Caco-2 (cell line): ENCODE measurements at regions of chr16 and their contacts with region 1.

Region 1: GRCh38 chr16:72832621-72833248 is 215.2 kb downstream of the ZFHX3 start:
- DNase-seq: peak; percentile 84 to 93
- H3K4me3 ChIP-seq: no peak overlapping the region
- H3K4me3 Mint-ChIP-seq: no peak overlapping the region
- H3K27ac Mint-ChIP-seq: no peak overlapping the region
- H3K4me1 ChIP-seq: peaks cover 17% of the 10 kb centered on the region
- H3K4me1 Mint-ChIP-seq: no peaks in the 10 kb centered on the region
- H3K27me3 ChIP-seq: no peaks in the 10 kb centered on the region
- H3K27me3 Mint-ChIP-seq: no peaks in the 10 kb centered on the region
- CTCF ChIP-seq: peak; percentile 97 to 99

Region 2: GRCh38 chr16:72501739-72502593 is 330.8 kb before region 1 on chr16:
- CTCF ChIA-PET with region 1: interaction called, 3 read pairs
- POLR2A ChIA-PET with region 1: no interaction called
- intact Hi-C with region 1: loop called (anchors 1 kb)
- DNase-seq: peak; percentile 66 to 75
- H3K4me3 ChIP-seq: no peak overlapping the region
- H3K4me3 Mint-ChIP-seq: no peak overlapping the region
- H3K27ac Mint-ChIP-seq: no peak overlapping the region
- H3K4me1 ChIP-seq: no peaks in the 10 kb centered on the region
- H3K4me1 Mint-ChIP-seq: peaks cover 7% of the 10 kb centered on the region
- H3K27me3 ChIP-seq: no peaks in the 10 kb centered on the region
- H3K27me3 Mint-ChIP-seq: no peaks in the 10 kb centered on the region
- CTCF ChIP-seq: peak; percentile 91 to 92

Region 3: GRCh38 chr16:72856797-72857196 is 24.1 kb after region 1 on chr16:
- CTCF ChIA-PET with region 1: interaction called, 13 read pairs
- POLR2A ChIA-PET with region 1: no interaction called
- intact Hi-C with region 1: no loop called
- DNase-seq: peak in 1 of 2 experiments; percentile 48
- H3K4me3 ChIP-seq: no peak overlapping the region
- H3K4me3 Mint-ChIP-seq: no peak overlapping the region
- H3K27ac Mint-ChIP-seq: no peak overlapping the region
- H3K4me1 ChIP-seq: no peaks in the 10 kb centered on the region
- H3K4me1 Mint-ChIP-seq: no peaks in the 10 kb centered on the region
- H3K27me3 ChIP-seq: no peaks in the 10 kb centered on the region
- H3K27me3 Mint-ChIP-seq: no peaks in the 10 kb centered on the region
- CTCF ChIP-seq: peak; percentile 29 to 53

Region 4: DNA sequence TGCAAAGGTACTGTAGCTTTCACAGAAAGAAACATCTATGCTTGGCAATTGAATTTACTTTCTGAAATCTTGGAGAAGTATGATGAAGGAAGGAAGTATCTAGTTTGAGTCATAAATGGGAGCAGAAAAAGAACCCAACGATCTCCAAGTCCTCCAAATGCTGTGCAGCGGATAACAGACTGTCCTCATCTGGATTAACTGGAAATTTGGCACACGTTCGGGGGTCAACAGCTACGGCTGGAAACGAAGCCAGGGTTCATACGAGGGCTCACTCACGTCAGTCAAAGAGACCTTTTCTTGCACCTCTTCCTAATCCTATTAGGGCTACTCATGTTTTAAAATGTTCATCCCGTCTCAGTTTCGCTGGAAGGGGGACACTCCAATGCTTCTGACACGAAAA is 63.2 kb after region 1 on chr16:
- CTCF ChIA-PET with region 1: interaction called, 13 read pairs
- POLR2A ChIA-PET with region 1: no interaction called
- intact Hi-C with region 1: no loop called
- DNase-seq: no peak
- H3K4me3 ChIP-seq: no peak overlapping the region
- H3K4me3 Mint-ChIP-seq: no peak overlapping the region
- H3K27ac Mint-ChIP-seq: no peak overlapping the region
- H3K4me1 ChIP-seq: no peaks in the 10 kb centered on the region; the same call in 1 of the 2 replicates
- H3K4me1 Mint-ChIP-seq: peaks cover 13% of the 10 kb centered on the region
- H3K27me3 ChIP-seq: no peaks in the 10 kb centered on the region
- H3K27me3 Mint-ChIP-seq: no peaks in the 10 kb centered on the region
- CTCF ChIP-seq: no peak

Region 5: DNA sequence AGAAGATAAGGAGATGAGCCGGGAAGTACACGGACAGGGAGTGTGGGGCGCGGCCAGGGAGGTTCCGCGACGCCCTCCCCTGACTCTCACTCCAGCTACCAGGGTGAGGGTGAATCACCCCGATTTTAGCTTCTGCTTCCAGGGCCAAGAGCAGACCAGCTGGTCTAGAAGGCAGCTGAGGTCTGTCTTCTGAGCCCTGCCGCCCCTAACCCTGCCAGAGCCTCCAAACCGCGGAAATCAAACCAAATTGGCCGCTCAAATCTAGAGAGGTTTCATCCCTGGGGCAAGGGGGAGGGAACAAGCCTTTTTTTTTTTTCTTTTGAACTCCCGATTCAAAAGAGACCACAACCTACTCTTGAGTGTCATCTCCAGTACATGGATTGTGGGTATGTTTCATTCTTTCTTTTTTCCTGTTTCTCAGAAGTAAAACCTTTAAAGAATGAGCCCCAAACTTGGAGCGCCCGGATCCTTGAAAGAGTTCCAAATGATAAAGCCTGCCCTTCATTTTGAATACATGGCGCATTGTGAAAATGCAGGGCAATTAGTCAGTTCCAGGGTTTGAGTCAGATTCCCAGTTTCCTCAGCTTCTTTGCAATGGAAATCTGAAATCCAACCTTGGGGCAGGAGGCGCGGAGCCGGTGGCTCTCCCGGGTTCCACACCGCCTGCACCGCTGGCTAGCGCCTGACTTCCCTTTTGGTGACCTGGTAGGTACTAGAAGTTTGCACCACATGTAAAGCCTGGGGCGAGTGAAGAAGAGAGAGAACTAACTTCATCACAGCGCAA is 231.7 kb after region 1 on chr16:
- CTCF ChIA-PET with region 1: interaction called, 12 read pairs
- POLR2A ChIA-PET with region 1: no interaction called
- intact Hi-C with region 1: no loop called
- DNase-seq: no peak
- H3K4me3 ChIP-seq: no peak overlapping the region
- H3K4me3 Mint-ChIP-seq: peak overlapping the region; percentile 62
- H3K27ac Mint-ChIP-seq: no peak overlapping the region
- H3K4me1 ChIP-seq: peaks cover 4% of the 10 kb centered on the region; the same call in 1 of the 2 replicates
- H3K4me1 Mint-ChIP-seq: peaks cover 22% of the 10 kb centered on the region
- H3K27me3 ChIP-seq: no peaks in the 10 kb centered on the region
- H3K27me3 Mint-ChIP-seq: no peaks in the 10 kb centered on the region
- CTCF ChIP-seq: no peak

Region 6: DNA sequence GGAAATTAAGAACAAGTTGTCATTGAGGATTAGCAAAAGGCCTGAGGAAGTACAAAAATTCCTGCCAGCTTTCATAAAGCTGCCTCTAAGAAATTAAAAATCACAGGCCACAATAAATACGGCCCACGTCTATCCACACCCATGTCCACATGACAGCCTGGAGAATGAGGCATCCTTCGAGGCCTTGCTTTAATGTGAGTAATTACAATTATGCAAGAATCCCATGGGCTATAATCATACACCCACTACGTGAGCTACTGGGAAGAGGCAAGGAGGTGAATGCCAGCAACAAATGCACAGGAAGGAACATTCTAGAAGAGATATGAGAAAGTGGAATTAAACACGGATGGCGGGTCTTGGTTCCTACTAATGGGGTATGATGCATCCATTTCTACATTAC is 280.6 kb after region 1 on chr16:
- CTCF ChIA-PET with region 1: no interaction called
- POLR2A ChIA-PET with region 1: no interaction called
- intact Hi-C with region 1: no loop called
- DNase-seq: no peak
- H3K4me3 ChIP-seq: no peak overlapping the region
- H3K4me3 Mint-ChIP-seq: no peak overlapping the region
- H3K27ac Mint-ChIP-seq: no peak overlapping the region
- H3K4me1 ChIP-seq: peaks cover 8% of the 10 kb centered on the region; the same call in 1 of the 2 replicates
- H3K4me1 Mint-ChIP-seq: peaks cover 13% of the 10 kb centered on the region
- H3K27me3 ChIP-seq: no peaks in the 10 kb centered on the region
- H3K27me3 Mint-ChIP-seq: no peaks in the 10 kb centered on the region
- CTCF ChIP-seq: no peak